Activated CD4-positive, alpha-beta T cell treated with anti-CD3 and anti-CD28 coated beads, Interleukin-2, amount 10 ng/mL, durations not matched to agents 24 days and 14 days (primary cell): ENCODE measurements at regions of chr5 and their contacts with region 1.

Region 1: GRCh38 chr5:100903039-100903887 is at the start of gene ST8SIA4:
- DNase-seq: peak; percentile 97
- H3K4me3 Mint-ChIP-seq: peak within 1 kb of the TSS; percentile 99
- H3K27ac Mint-ChIP-seq: peak within 1 kb of the TSS; percentile 96
- H3K4me1 Mint-ChIP-seq: peaks cover 35% of the 10 kb centered on the region
- H3K27me3 Mint-ChIP-seq: no peaks in the 10 kb centered on the region
- total RNA-seq, gene ST8SIA4: 61.3 and 62.3 TPM in 2 replicates

Region 2: DNA sequence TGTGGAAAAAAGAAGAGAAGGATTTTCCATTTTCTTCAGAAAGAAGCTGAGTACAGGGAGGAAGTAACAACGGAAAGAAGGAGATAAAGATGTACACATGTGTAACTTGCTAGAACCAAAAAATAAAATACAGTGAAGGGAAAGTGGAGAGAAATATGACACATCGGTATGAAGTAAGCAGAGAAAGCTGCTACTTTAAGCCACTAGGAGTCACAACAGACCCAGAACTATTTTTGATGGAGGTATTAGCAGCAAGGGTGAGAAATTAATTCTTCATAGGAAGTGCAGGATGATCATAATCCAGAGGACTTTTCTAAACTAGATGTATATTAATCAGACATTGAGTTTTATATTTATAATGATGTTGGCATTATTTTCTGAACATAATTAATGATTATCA is 279.5 kb before region 1 on chr5:
- intact Hi-C with region 1: loop called (anchors 10 kb)
- DNase-seq: no peak
- H3K4me3 Mint-ChIP-seq: no peak overlapping the region
- H3K27ac Mint-ChIP-seq: no peak overlapping the region
- H3K4me1 Mint-ChIP-seq: no peaks in the 10 kb centered on the region
- H3K27me3 Mint-ChIP-seq: peaks cover 2% of the 10 kb centered on the region

Region 3: DNA sequence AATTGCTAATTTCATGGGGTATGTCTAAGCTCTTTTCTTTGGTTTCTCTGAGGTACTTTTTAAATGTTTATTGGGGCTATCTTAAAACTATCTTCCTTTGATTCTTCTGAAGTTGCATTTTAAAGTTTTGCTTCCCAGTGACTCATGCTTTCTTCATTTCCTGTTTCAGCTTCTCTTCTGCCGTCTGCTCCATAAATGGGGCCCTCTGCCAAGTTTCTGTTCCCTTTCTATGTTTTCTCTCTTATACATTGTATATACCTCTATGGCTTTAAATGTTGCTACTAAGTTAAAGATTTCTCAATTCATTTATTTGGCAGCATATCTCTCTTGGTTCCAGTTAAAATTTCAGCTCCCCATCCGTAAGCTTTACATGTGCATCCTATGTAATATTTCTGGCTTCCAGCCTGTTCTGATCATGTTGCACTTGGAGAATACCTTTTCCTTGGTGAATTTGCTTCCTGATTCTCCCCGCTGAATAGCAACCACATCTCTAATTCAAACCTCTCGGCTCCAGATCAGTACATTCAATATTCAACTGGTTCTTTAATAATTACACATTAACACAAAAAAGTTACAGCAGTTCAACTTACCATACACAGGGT is 125.5 kb before region 1 on chr5:
- intact Hi-C with region 1: loop called (anchors 1 kb)
- DNase-seq: peak; percentile 63
- H3K4me3 Mint-ChIP-seq: peak overlapping the region; percentile 19
- H3K27ac Mint-ChIP-seq: peak overlapping the region; percentile 49
- H3K4me1 Mint-ChIP-seq: peaks cover 46% of the 10 kb centered on the region
- H3K27me3 Mint-ChIP-seq: no peaks in the 10 kb centered on the region

Region 4: GRCh38 chr5:100852988-100853449 is 50.2 kb before region 1 on chr5:
- intact Hi-C with region 1: loop called (anchors 1 kb)
- DNase-seq: no peak
- H3K4me3 Mint-ChIP-seq: peak overlapping the region; percentile 73
- H3K27ac Mint-ChIP-seq: peak overlapping the region; percentile 89
- H3K4me1 Mint-ChIP-seq: peaks cover 31% of the 10 kb centered on the region
- H3K27me3 Mint-ChIP-seq: no peaks in the 10 kb centered on the region

Region 5: GRCh38 chr5:100890461-100891008 is 12.7 kb before region 1 on chr5:
- intact Hi-C with region 1: loop called (anchors 1 kb)
- DNase-seq: no peak
- H3K4me3 Mint-ChIP-seq: peak overlapping the region; percentile 80
- H3K27ac Mint-ChIP-seq: peak overlapping the region; percentile 92
- H3K4me1 Mint-ChIP-seq: peaks cover 51% of the 10 kb centered on the region
- H3K27me3 Mint-ChIP-seq: no peaks in the 10 kb centered on the region

Region 6: GRCh38 chr5:102755686-102756371 is 1852.6 kb after region 1 on chr5:
- intact Hi-C with region 1: loop called (anchors 5 kb)
- DNase-seq: peak; percentile 88
- H3K4me3 Mint-ChIP-seq: peak overlapping the region; percentile 95
- H3K27ac Mint-ChIP-seq: peak overlapping the region; percentile 97
- H3K4me1 Mint-ChIP-seq: peaks cover 43% of the 10 kb centered on the region
- H3K27me3 Mint-ChIP-seq: peaks cover 2% of the 10 kb centered on the region